Gastrocnemius medialis (tissue), 4 donors: ENCODE measurements at regions of chr19 and their contacts with region 1.

Region 1: GRCh38 chr19:43901395-43902390 is 33.4 kb downstream of the ZNF45 start:
- DNase-seq: peak; percentile 48 to 74
- ATAC-seq: peak; percentile 86 to 99
- H3K4me3 ChIP-seq: peak overlapping the region; percentile 56 to 95 (median 58)
- H3K27ac ChIP-seq: peak overlapping the region in 3 of 4 donors; percentile 28 to 66 (median 31)
- H3K4me1 ChIP-seq: peaks cover 0 to 3% of the 10 kb centered on the region in 2 donors
- H3K27me3 ChIP-seq: no peaks in the 10 kb centered on the region
- CTCF ChIP-seq: no peak
- POLR2A ChIP-seq: no peak

Region 2: DNA sequence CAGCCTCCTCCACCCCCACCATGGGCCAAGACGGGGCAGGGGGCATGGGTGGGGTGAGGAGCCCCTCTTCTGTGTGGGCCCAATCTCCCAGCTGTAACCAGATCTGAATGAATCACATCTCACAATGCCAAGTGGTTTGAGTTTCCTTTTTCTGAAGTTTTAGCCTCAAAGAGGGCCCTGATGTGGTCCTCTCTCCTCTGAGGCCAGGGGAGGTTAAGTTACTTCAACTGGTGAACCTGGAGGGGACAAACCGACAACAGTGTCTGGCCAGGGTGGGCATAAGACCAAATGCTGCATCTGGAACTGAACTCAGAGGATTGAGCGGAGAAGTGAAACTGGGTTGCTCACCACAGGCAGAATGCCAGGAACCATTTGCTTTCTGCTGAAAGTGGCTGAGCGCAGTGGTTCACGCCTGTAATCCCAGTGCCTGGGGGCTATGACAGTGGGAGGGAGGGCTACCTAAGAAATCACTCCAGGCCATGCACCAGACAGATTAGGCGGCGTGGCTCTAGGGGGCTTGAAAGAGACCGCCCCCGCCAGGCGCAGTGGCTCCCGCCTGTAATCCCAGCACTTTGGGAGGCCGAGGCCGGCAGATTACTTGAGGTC is 201.2 kb before region 1 on chr19:
- in situ Hi-C with region 1: no loop called
- intact Hi-C with region 1: no loop called
- DNase-seq: peak; percentile 7 to 31
- ATAC-seq: peak; percentile 56 to 60
- H3K4me3 ChIP-seq: peak overlapping the region in 3 of 4 donors; percentile 36 to 43 (median 37)
- H3K27ac ChIP-seq: peak overlapping the region; percentile 45 to 82 (median 60)
- H3K4me1 ChIP-seq: peaks cover 0 to 7% of the 10 kb centered on the region in 2 donors
- H3K27me3 ChIP-seq: peaks cover 4 to 11% (median 9%) of the 10 kb centered on the region in 3 donors
- CTCF ChIP-seq: no peak
- POLR2A ChIP-seq: no peak

Region 3: GRCh38 chr19:43950834-43951645 is 49.3 kb after region 1 on chr19 and contains the start of gene ZNF221:
- in situ Hi-C with region 1: no loop called
- intact Hi-C with region 1: loop called (anchors 1 kb)
- DNase-seq: peak; percentile 87 to 90
- ATAC-seq: peak; percentile 100
- H3K4me3 ChIP-seq: peak within 1 kb of the TSS; percentile 70 to 97 (median 84)
- H3K27ac ChIP-seq: peak within 1 kb of the TSS; percentile 66 to 80 (median 74)
- H3K4me1 ChIP-seq: peaks cover 0 to 3% of the 10 kb centered on the region in 2 donors
- H3K27me3 ChIP-seq: no peaks in the 10 kb centered on the region
- CTCF ChIP-seq: peak in 4 of 5 experiments; percentile 19 to 48 (median 38)
- POLR2A ChIP-seq: no peak
- total RNA-seq, gene ZNF221: 0.76 to 15.3 (median 0.96) TPM